Dorsolateral prefrontal cortex (tissue), 120 donors: ENCODE measurements at regions of chr5 and their contacts with region 1.

Region 1: DNA sequence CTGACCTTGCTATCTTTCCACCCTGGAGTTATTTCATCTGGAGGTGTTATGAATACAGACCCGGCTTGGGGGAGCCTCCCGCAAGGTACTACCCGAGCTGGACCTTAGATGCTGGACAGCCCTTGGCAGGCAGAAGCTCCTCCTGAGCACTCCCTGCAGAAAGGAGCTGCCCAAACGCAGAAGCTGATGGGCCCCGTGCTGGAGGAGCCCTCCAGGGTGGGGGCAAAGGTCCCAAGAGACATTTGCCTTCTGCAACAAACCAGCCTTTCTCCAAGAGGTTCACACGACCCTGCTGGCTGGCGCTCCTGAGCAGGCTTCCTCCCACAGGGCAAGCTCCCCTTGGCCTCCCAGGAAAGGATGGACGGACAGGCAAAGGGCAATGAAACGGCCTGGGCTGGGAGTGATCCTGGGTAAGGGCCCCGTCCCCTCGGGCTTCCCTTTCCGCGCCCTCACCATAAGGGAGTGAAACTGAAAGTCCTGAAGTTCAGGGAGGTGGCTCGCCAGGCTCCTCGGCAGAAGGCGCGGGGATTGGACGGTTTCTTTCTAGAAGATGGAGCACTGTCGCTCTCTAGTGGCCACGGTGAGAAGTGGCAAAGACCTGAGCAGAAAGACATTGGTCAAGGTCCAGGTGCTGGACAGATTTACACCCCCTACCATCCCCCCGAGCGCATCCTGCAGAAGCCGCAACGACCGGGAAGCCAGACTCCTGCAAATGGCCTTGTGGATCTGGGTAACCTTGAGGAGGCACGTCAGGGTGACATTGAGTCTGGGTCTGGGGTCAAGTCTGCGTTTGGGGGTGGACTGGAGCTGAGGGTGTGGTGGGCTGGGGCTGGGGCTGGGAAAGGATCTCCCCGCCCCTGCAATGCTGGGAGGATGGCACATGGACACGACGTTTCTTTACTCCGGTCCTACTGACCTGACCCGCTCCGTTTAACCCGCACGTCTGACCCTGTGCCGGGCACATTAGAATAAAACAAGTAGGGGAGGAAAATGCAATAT is 56.4 kb downstream of the NEURL1B start:
- DNase-seq: peak; percentile 76 to 88 (median 85)
- H3K4me3 ChIP-seq: peak overlapping the region; percentile 24 to 78 (median 61)
- H3K27ac ChIP-seq: peak overlapping the region in 42 of 59 donors; percentile 5 to 82 (median 62)
- H3K27me3 ChIP-seq: no peaks in the 10 kb centered on the region
- CTCF ChIP-seq: peak; percentile 82 to 99 (median 95)

Region 2: DNA sequence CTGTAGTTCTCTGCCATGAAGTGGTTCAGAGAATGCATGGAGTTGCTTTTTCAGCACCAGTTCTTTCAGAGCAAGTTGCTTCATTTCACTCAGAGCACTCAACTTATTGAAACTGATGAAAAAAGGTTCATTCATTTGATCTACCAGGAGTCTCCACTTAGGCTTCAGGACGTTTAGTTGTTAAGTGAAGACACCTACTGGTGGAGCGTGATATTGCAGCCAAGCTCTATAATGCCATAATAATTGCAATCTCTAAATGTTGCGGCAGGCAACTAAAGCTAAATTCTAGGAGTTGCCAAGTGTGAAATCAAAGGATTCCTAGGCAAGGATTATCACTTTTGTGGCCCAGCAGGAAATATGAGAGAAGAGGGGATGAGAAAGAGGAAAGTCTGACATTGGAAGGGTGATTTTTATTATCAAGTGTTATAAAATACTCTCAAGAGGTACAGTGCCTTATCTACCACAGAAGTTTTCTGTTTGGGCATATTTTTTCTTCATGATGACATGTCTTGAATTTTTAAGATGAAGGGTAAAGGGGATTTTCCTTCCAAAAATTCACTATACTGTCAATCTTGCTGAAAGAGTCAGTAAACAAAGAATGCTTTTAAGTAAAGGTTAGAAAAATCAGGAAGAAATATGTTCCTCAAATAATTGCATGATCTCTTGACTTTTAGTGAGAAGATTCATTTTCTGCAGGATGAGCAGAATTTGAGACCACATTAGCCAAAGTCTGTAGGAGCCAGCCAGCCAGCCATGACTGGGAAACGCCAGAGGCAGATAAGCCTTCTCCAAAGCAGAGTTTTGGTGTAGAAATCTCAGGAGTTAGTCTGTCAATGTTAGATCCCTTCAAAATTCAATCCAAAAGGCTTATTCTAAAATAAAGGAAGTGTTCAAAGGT is 326.5 kb before region 1 on chr5:
- intact Hi-C with region 1: loop called in 1 of 2 experiments (anchors 10 kb)
- DNase-seq: peak in 1 of 10 donors; percentile 59
- H3K4me3 ChIP-seq: no peak overlapping the region
- H3K27ac ChIP-seq: peak overlapping the region in 8 of 59 donors; percentile 8 to 63 (median 27)
- H3K27me3 ChIP-seq: no peaks in the 10 kb centered on the region
- CTCF ChIP-seq: peak in 49 of 56 donors; percentile 22 to 63 (median 43)

Region 3: GRCh38 chr5:172380987-172381643 is 316.3 kb before region 1 on chr5:
- intact Hi-C with region 1: loop called (anchors 10 kb)
- DNase-seq: peak; percentile 84 to 94 (median 90)
- H3K4me3 ChIP-seq: peak overlapping the region in 46 of 59 donors; percentile 2 to 57 (median 36)
- H3K27ac ChIP-seq: peak overlapping the region in 55 of 59 donors; percentile 5 to 84 (median 65)
- H3K27me3 ChIP-seq: no peaks in the 10 kb centered on the region
- CTCF ChIP-seq: peak in 7 of 56 donors; percentile 11 to 35 (median 20)

Region 4: DNA sequence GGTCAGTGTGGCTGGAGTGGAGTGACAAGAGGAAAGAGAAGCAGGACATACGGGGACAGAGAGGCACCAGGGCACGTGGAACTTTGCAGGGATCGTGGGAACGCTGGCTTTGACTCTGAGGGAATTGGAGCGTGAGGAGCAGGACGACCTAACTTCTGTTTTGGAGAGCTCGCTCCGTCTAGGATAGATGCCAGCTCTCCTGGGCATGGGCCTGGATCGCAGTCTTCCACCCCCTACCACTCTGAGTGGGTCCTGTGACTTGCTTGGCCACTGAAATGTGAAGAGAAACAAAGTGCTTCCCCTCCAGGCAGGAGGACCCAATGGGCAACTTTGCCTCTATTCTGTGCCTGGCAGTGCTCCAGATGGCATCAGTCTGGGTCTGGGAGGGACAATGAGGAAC is 234.4 kb before region 1 on chr5:
- intact Hi-C with region 1: loop called in 1 of 2 experiments (anchors 5 kb)
- DNase-seq: peak in 2 of 10 donors; percentile 46 to 62
- H3K4me3 ChIP-seq: no peak overlapping the region
- H3K27ac ChIP-seq: peak overlapping the region in 7 of 59 donors; percentile 6 to 54 (median 22)
- H3K27me3 ChIP-seq: no peaks in the 10 kb centered on the region
- CTCF ChIP-seq: no peak

Region 5: DNA sequence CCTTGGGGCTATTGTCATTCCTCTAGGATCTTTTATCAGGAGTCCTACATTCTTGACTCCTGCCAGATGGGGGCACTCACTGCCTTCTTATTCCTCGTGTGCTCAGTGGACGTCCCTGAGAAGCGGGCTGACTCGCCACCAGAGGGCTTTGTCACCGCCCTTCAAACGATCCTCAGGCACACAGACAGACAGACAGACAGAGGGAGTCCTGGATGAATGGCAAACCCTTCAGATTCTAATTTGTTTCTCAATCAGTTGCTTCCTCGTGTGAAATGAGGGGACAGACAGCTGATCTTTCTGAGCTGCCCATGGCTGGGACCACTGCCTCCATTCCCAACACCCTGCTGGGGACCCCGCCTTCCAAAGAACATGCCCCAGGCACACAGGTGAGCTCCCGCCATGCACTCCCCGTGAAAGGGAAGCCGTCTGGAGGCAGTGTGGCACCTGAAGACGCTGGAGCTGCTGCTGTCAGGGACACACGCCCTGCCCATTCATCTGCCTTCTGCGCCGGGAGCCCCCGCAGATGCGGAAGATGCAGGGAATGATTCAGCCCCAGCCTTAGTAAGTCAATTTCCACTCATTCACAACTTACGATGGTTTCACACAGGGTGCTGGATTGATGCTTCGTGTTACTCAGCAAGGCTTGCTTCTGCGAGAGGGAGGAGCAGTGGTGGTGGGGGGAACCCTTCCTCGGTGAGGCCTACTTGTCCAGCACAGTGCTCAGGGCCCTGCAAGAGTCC is 218.2 kb before region 1 on chr5:
- intact Hi-C with region 1: loop called (anchors 1 kb)
- DNase-seq: peak; percentile 59 to 92 (median 84)
- H3K4me3 ChIP-seq: peak overlapping the region in 2 of 59 donors; percentile 6 to 20
- H3K27ac ChIP-seq: peak overlapping the region in 18 of 59 donors; percentile 0 to 46 (median 22)
- H3K27me3 ChIP-seq: no peaks in the 10 kb centered on the region
- CTCF ChIP-seq: peak; percentile 60 to 97 (median 90)

Region 6: DNA sequence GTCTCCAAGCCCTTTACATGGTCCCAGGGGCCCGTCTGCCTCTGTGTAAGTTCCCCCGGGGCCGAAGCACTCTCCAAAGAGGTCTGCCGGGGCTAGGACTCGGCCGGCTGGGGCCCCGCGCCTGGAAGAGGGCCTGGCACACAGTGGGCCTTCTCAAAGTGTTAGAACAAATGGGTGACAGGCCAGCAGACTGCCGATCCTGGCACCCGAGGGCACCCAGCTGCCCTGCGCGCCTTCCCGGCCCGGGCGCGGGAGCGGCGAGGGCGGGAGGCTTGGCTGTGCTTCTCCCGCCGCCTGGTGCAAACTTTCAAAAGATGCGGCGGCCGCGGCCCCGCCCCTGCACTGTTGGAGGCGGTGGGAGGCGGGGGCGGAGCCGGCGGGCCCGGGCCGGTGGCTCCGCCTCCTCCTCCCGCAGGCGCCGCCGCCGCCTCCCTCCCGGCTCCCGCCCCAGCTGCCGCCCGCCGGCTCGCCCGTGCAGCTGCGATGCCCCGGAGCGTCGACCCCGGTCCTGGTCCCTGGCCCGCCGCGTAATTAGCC is 56.5 kb before region 1 on chr5 and contains the start of gene NEURL1B:
- intact Hi-C with region 1: loop called (anchors 5 to 10 kb)
- DNase-seq: peak; percentile 50 to 87 (median 76)
- H3K4me3 ChIP-seq: peak within 1 kb of the TSS; percentile 52 to 94 (median 78)
- H3K27ac ChIP-seq: peak within 1 kb of the TSS; percentile 41 to 98 (median 90)
- H3K27me3 ChIP-seq: peaks cover 0 to 8% (median 0%) of the 10 kb centered on the region in 45 donors
- CTCF ChIP-seq: peak in 19 of 56 donors; percentile 7 to 46 (median 15)
- total RNA-seq, gene NEURL1B: 8.3 to 21.9 (median 13.9) TPM